ENCODE measurements at regions of chr5 and their contacts with region 1.

Region 1: DNA sequence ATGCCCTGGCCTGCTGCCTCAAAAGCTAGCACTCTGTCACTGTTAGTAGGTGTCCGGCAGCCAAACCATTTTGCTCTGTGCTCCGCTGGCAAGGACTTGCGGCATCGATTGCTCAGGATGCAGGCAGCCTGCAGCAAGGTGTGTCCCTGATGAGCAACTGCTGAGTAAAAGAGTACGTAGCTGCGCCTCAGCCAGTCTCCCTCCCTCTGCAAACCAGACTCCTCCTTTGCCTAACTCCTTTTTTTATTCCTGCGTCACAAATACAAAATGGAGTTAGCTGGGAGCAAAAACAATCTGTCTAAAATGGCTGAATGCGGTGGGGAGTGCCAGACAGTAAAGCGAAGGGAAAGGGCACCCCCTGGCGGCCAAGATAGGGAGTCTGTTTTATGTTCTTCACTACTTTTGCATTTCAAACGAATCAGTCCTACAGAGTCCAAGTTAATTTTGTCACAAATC is 61.1 kb downstream of the DIAPH1 start:
- DNase-seq: peak; percentile 80
- H3K4me3 Mint-ChIP-seq: no peak overlapping the region
- H3K27ac Mint-ChIP-seq: peak overlapping the region; percentile 60
- H3K4me1 Mint-ChIP-seq: peaks cover 14% of the 10 kb centered on the region
- H3K27me3 Mint-ChIP-seq: no peaks in the 10 kb centered on the region

Region 2: DNA sequence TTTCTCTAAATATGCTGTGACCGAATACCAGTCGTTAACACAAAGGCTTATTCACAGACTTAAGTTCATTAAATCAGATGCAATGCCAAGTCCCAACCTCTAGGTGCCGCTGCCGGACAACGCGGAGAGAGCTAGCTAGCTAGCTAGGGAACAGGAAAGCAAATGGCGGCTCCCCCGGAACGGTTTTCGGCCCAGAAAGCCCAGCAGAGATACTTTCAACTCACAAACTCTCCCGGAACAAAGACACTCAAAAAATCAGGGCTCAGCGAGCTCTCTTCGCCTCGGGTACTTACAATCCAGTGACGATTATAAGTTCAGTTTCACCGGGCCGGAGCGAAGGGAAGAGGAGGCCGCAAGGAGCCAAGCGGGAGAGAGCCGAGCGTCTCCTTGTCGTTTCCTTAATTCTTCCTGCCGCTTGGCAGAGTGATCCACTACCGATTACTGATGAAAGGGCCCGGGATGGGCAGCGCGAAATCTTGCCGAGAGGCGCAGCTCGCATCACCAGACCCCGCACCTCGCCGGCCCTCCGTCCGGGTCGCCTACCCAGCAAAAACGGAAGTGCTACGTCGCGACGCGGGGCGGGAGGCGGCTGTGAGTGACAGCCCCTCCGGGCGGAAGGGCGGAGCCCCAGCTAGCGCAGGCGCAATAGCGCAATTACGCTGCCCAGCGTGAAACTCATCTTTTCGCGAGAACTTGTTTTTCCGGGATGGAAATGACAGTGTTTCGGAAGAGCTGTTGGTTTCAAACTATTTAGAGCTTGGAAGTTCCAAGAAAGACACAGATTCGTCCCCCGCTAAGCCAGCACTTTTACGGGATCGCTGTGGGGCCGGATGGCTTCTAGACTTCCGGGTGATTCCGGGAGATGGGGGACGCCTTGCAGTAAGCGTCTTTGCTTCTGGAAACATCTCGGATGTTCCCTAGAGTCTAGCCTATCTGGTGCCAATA is 237.2 kb before region 1 on chr5 and contains the start of gene TAF7:
- CTCF ChIA-PET with region 1: interaction called, 10 read pairs
- DNase-seq: peak; percentile 94
- H3K4me3 Mint-ChIP-seq: peak within 1 kb of the TSS; percentile 87
- H3K27ac Mint-ChIP-seq: peak within 1 kb of the TSS; percentile 98
- H3K4me1 Mint-ChIP-seq: peaks cover 24% of the 10 kb centered on the region
- H3K27me3 Mint-ChIP-seq: peaks cover 7% of the 10 kb centered on the region

Region 3: DNA sequence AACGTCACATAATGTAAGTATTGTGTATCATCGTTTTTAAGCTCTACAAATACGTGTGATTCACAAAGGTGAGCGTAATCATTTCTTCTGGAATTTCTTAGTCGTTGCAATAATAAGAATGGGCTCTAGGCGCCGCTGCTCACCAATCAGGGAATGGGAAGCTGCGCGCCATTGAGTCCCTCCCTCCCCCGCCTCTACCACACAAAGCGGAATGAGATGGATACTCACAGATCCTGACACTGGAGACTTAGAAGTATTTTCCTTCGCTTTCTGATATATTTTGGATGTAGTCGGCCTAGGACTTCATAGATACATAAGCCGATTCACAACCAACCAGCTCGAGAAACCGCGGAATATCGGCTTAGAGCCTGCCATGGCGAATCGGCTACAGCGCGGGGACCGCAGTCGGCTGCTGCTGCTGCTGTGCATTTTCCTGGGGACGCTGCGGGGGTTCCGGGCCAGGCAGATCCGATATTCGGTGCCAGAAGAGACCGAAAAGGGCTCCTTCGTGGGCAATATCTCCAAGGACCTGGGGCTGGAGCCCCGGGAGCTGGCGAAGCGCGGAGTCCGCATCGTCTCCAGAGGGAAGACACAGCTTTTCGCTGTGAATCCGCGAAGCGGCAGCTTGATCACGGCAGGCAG is 136.7 kb before region 1 on chr5 and contains the start of gene PCDHGA11:
- CTCF ChIA-PET with region 1: interaction called, 14 read pairs
- DNase-seq: peak; percentile 52
- H3K4me3 Mint-ChIP-seq: peak within 1 kb of the TSS; percentile 76
- H3K27ac Mint-ChIP-seq: peak within 1 kb of the TSS; percentile 77
- H3K4me1 Mint-ChIP-seq: peaks cover 16% of the 10 kb centered on the region
- H3K27me3 Mint-ChIP-seq: peaks cover 69% of the 10 kb centered on the region

Region 4: DNA sequence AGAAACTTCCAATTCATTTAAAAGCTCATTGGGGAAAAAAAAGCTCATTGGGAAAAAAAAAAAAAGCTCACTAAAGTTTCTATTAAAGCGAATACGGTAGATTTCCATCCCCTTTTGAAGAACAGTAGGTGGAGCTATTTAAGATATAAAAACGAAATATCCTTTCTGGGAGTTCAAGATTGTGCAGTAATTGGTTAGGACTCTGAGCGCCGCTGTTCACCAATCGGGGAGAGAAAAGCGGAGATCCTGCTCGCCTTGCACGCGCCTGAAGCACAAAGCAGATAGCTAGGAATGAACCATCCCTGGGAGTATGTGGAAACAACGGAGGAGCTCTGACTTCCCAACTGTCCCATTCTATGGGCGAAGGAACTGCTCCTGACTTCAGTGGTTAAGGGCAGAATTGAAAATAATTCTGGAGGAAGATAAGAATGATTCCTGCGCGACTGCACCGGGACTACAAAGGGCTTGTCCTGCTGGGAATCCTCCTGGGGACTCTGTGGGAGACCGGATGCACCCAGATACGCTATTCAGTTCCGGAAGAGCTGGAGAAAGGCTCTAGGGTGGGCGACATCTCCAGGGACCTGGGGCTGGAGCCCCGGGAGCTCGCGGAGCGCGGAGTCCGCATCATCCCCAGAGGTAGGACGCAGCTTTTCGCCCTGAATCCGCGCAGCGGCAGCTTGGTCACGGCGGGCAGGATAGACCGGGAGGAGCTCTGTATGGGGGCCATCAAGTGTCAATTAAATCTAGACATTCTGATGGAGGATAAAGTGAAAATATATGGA is 127.2 kb before region 1 on chr5 and contains the start of gene PCDHGA12:
- CTCF ChIA-PET with region 1: interaction called, 24 read pairs
- DNase-seq: peak; percentile 36
- H3K4me3 Mint-ChIP-seq: peak within 1 kb of the TSS; percentile 67
- H3K27ac Mint-ChIP-seq: peak within 1 kb of the TSS; percentile 82
- H3K4me1 Mint-ChIP-seq: peaks cover 12% of the 10 kb centered on the region
- H3K27me3 Mint-ChIP-seq: peaks cover 59% of the 10 kb centered on the region

Region 5: GRCh38 chr5:141524604-141525597 is 32.8 kb before region 1 on chr5:
- CTCF ChIA-PET with region 1: interaction called, 15 read pairs
- DNase-seq: peak; percentile 56
- H3K4me3 Mint-ChIP-seq: no peak overlapping the region
- H3K27ac Mint-ChIP-seq: no peak overlapping the region
- H3K4me1 Mint-ChIP-seq: peaks cover 9% of the 10 kb centered on the region
- H3K27me3 Mint-ChIP-seq: no peaks in the 10 kb centered on the region

Region 6: GRCh38 chr5:141701360-141702119 is 143.8 kb after region 1 on chr5:
- CTCF ChIA-PET with region 1: no interaction called
- DNase-seq: no peak
- H3K4me3 Mint-ChIP-seq: peak overlapping the region; percentile 70
- H3K27ac Mint-ChIP-seq: no peak overlapping the region
- H3K4me1 Mint-ChIP-seq: peaks cover 22% of the 10 kb centered on the region
- H3K27me3 Mint-ChIP-seq: peaks cover 40% of the 10 kb centered on the region